Kidney (tissue), 22 donors: ENCODE measurements at regions of chr1 and their contacts with region 1.

Region 1: DNA sequence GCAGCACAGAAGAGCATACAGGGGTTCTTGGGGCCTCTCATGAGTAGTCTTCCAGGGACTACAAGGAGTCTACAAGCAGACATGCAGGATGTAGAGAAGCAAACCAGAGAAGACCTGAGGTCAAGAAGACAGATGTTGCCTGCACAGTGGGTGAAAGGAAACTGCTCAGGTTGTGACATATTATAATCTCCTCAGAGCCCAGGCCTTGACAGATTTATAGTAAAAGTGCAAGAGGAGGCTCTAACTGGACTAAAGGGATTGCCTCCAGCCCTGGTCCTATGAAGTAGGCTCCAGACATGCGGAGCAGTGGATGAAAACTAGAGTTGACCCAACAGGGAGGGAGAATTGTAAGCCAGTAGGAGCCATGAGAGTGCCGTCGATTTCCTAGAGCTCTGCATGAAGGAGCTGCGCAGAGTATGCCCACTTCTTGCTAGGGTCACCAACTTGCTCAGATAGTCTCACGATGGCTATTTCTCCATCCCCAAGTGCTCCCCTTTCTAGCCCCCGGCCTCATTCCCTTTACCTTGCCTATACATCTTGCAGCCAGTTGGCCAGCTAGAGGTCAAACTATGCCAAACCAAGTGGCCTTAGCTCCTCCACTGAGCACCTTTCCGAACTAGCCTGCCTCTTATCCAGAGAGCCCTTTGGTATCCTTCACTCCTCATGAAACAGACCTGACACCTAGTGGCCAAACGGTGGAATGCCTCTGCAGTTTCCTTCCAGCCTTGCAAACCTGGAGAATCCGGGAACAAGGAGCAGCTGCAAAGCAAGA is 36.2 kb upstream of the IPO9 start:
- DNase-seq: peak; percentile 72 to 92 (median 84)
- H3K4me3 ChIP-seq: no peak overlapping the region
- H3K27ac ChIP-seq: peak overlapping the region in 1 of 2 donors; percentile 72
- H3K4me1 ChIP-seq: peaks cover 7 to 20% (median 9%) of the 10 kb centered on the region in 3 donors
- H3K27me3 ChIP-seq: no peaks in the 10 kb centered on the region
- CTCF ChIP-seq: peak; percentile 95

Region 2: GRCh38 chr1:201559679-201560162 is 233.0 kb before region 1 on chr1:
- intact Hi-C with region 1: loop called (anchors 10 kb)
- DNase-seq: peak; percentile 77 to 91 (median 85)
- H3K4me3 ChIP-seq: no peak overlapping the region
- H3K27ac ChIP-seq: no peak overlapping the region
- H3K4me1 ChIP-seq: peaks cover 0 to 2% (median 0%) of the 10 kb centered on the region in 3 donors
- H3K27me3 ChIP-seq: no peaks in the 10 kb centered on the region
- CTCF ChIP-seq: peak; percentile 99

Region 3: GRCh38 chr1:201709564-201710295 is 83.0 kb before region 1 on chr1:
- intact Hi-C with region 1: loop called (anchors 5 kb)
- DNase-seq: peak in 4 of 5 donors; percentile 55 to 85 (median 72)
- H3K4me3 ChIP-seq: no peak overlapping the region
- H3K27ac ChIP-seq: no peak overlapping the region
- H3K4me1 ChIP-seq: peaks cover 0 to 14% (median 9%) of the 10 kb centered on the region in 3 donors
- H3K27me3 ChIP-seq: no peaks in the 10 kb centered on the region
- CTCF ChIP-seq: peak; percentile 91

Region 4: DNA sequence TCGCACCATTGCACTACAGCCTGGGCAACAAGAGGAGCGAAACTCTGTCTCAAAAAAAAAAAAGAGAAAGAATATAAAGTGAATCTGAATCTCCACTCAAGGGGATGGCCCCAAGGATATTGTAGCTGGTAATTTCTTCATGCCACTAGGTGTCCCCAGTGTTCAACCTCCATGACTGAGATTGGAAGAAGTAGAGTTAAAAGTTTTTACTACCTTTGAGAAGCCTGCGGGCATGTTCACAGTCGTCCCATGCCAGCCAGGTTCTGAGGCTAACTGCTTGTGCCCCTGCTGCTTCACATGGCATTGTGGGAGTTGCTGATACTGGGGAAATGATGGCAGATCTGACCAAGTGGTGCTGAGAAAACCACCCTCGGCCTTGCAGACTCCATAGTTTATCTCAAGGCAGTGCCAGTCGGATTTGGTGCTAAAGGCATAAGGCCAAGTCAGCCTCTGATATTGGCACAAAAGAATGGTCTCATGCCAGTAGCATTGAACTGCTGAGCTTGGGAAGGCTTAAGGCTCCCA is 85.2 kb after region 1 on chr1:
- intact Hi-C with region 1: no loop called
- DNase-seq: peak in 3 of 5 donors; percentile 59 to 86 (median 74)
- H3K4me3 ChIP-seq: no peak overlapping the region
- H3K27ac ChIP-seq: no peak overlapping the region
- H3K4me1 ChIP-seq: peaks cover 0 to 4% (median 0%) of the 10 kb centered on the region in 3 donors
- H3K27me3 ChIP-seq: no peaks in the 10 kb centered on the region
- CTCF ChIP-seq: peak; percentile 55